K562 (cell line): ENCODE measurements at regions of chr6 and their contacts with region 1.

Region 1: GRCh38 chr6:41941280-41942066 is at the start of gene CCND3:
- DNase-seq: peak; percentile 92 to 98 (median 94)
- ATAC-seq: peak; percentile 84
- H3K4me3 ChIP-seq: peak within 1 kb of the TSS; percentile 81
- H3K27ac ChIP-seq: peak within 1 kb of the TSS; percentile 72
- H3K4me1 ChIP-seq: peaks cover 40 to 55% of the 10 kb centered on the region in 2 experiments
- H3K27me3 ChIP-seq: no peaks in the 10 kb centered on the region
- CTCF ChIP-seq: peak in 2 of 3 experiments; percentile 6 to 12; a peak in 1 of 6 replicates
- EP300 ChIP-seq: 0 out of 2 replicates have a peak, but pooled peaks have one; percentile 8
- POLR2A ChIP-seq: peak; percentile 70
- RAD21 ChIP-seq: no peak
- polyA plus RNA-seq, gene CCND3: 21.5 to 24.7 TPM

Region 2: GRCh38 chr6:41840326-41840725 is 101.1 kb before region 1 on chr6:
- CTCF ChIA-PET with region 1: no interaction called
- POLR2A ChIA-PET with region 1: no interaction called
- in situ Hi-C with region 1: no loop called
- intact Hi-C with region 1: no loop called
- DNase-seq: no peak
- ATAC-seq: no peak
- H3K4me3 ChIP-seq: no peak overlapping the region
- H3K27ac ChIP-seq: no peak overlapping the region
- H3K4me1 ChIP-seq: peaks cover 0 to 9% of the 10 kb centered on the region in 2 experiments; a peak in 3 of 5 replicates
- H3K27me3 ChIP-seq: no peaks in the 10 kb centered on the region
- CTCF ChIP-seq: no peak
- EP300 ChIP-seq: no peak
- POLR2A ChIP-seq: no peak
- RAD21 ChIP-seq: no peak

Region 3: DNA sequence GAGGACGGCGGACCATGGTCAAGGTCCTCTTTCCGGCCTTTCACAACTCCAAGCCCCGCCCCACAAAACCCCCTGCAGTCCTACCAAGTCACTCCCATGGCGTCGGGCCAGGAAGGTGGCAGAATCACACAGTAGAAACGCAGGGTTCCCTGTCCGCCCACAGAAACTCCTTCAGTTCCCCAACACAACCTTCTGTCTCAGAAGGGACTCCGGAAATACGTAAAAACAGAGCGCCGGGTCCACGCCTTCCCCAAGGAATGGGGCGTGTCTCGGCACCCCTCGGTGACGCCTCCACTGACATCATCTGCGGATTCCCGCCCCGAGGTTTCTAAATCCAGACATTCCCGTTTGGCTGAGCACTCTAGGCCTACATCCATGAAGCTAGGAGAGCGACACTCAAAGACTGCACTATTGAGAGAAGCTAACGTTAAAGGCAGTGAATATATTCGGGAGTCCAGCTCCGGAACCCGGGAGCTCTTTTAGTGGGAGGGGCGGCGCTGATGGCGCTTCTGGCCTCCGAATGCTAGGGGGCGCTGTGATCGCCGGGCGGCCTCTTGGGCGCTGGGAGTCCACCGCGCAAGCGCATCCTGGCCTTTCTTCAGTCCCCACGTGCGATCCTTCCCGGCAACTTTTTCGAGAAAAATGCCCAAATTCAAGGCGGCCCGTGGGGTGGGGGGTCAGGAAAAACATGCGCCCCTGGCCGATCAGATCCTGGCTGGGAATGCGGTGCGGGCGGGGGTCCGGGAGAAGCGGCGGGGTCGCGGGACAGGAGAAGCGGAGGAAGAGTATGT is 20.4 kb before region 1 on chr6 and contains the starts of genes BYSL and MED20:
- CTCF ChIA-PET with region 1: no interaction called
- POLR2A ChIA-PET with region 1: interaction called, 166 read pairs
- in situ Hi-C with region 1: no loop called
- intact Hi-C with region 1: loop called (anchors 1 kb)
- DNase-seq: peak; percentile 95 to 98 (median 96)
- ATAC-seq: peak; percentile 89
- H3K4me3 ChIP-seq: peak within 1 kb of the TSS; percentile 82
- H3K27ac ChIP-seq: peak within 1 kb of the TSS; percentile 98
- H3K4me1 ChIP-seq: peaks cover 14 to 16% of the 10 kb centered on the region in 2 experiments; a peak in 4 of 5 replicates
- H3K27me3 ChIP-seq: no peaks in the 10 kb centered on the region
- CTCF ChIP-seq: peak; percentile 91 to 99 (median 98)
- EP300 ChIP-seq: peak; percentile 43; the same call in 1 of the 2 replicates
- POLR2A ChIP-seq: peak; percentile 88
- RAD21 ChIP-seq: peak in 1 of 2 experiments; percentile 20; a peak in 3 of 4 replicates
- polyA plus RNA-seq, gene BYSL: 22.2 to 25.8 TPM
- polyA plus RNA-seq, gene MED20: 63.8 to 80.9 TPM

Region 4: DNA sequence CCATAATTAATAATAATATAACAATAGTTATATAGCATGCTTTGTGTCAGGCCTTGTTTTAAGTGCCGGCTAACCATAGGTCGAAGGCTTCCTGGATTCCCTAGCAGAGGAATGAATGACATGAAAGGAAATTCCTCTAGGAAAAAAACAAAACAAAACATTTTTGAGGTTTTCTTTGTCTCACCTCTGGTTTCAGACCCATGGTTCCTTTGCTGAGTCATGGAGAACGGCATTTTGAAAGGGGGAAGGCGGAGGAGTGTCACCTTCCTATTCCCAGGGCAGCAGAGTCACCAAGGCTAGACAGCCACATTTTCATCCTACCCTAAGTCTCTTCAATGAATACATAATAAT is 25.5 kb after region 1 on chr6:
- CTCF ChIA-PET with region 1: no interaction called
- POLR2A ChIA-PET with region 1: interaction called, 11 read pairs
- in situ Hi-C with region 1: no loop called
- intact Hi-C with region 1: loop called (anchors 1 kb)
- DNase-seq: peak; percentile 81 to 86 (median 83)
- ATAC-seq: peak; percentile 86
- H3K4me3 ChIP-seq: no peak overlapping the region
- H3K27ac ChIP-seq: peak overlapping the region; percentile 81
- H3K4me1 ChIP-seq: peaks cover 19 to 37% of the 10 kb centered on the region in 2 experiments
- H3K27me3 ChIP-seq: no peaks in the 10 kb centered on the region
- CTCF ChIP-seq: no peak
- EP300 ChIP-seq: peak; percentile 45; the same call in 1 of the 2 replicates
- POLR2A ChIP-seq: 0 out of 2 replicates have a peak, but pooled peaks have one; percentile 15
- RAD21 ChIP-seq: no peak

Region 5: DNA sequence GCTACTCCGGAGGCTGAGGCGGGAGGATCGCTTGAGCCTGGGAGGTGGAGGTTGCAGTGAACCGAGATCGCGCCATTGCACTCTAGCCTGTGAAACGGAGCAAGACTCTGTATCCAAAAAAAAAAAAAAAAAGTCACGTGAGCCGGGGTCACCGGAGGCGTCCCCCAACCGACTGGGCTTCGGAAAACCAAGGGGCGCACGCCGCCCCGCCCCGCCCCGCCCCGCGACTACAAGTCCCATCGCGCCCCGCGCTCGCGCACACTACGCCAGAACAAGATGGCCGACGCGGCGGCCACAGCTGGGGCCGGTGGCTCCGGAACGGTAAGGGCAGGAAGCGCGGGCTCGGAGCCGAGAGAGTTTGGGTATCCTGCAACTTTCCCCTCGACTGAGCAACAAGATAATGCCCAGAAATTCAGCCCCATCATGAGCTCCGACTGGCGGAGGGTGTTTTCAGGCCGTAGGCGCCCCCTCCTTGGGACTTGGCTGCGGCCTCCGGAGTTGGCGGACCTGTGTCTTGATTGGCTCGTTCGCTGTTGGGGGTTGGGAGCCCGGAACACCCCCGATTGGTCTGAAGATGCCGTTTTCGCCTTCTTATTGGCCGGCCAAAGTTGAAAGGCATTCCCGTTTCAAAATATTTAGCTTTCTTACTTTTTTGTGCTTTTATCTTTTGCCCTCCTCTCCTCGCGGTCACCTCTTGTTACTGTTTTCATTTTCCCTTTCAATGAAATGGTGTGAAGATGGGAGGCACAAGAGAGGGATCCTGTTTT is 109.0 kb after region 1 on chr6 and contains the start of gene TAF8:
- CTCF ChIA-PET with region 1: interaction called, 33 read pairs
- POLR2A ChIA-PET with region 1: interaction called, 10 read pairs
- in situ Hi-C with region 1: no loop called
- intact Hi-C with region 1: no loop called
- DNase-seq: peak; percentile 94 to 99 (median 96)
- ATAC-seq: peak; percentile 91
- H3K4me3 ChIP-seq: peak within 1 kb of the TSS; percentile 86
- H3K27ac ChIP-seq: peak within 1 kb of the TSS; percentile 98
- H3K4me1 ChIP-seq: peaks cover 38 to 41% of the 10 kb centered on the region in 2 experiments
- H3K27me3 ChIP-seq: no peaks in the 10 kb centered on the region
- CTCF ChIP-seq: peak in 1 of 3 experiments; percentile 5; a peak in 2 of 6 replicates
- EP300 ChIP-seq: no peak
- POLR2A ChIP-seq: peak; percentile 100
- RAD21 ChIP-seq: no peak
- polyA plus RNA-seq, gene TAF8: 58.9 to 84.0 TPM